Activated CD4-positive, alpha-beta T cell treated with anti-CD3 and anti-CD28 coated beads, Interleukin-2, amount 10 ng/mL, durations not matched to agents 24 days and 14 days (primary cell): ENCODE measurements at regions of chr3 and their contacts with region 1.

Region 1: DNA sequence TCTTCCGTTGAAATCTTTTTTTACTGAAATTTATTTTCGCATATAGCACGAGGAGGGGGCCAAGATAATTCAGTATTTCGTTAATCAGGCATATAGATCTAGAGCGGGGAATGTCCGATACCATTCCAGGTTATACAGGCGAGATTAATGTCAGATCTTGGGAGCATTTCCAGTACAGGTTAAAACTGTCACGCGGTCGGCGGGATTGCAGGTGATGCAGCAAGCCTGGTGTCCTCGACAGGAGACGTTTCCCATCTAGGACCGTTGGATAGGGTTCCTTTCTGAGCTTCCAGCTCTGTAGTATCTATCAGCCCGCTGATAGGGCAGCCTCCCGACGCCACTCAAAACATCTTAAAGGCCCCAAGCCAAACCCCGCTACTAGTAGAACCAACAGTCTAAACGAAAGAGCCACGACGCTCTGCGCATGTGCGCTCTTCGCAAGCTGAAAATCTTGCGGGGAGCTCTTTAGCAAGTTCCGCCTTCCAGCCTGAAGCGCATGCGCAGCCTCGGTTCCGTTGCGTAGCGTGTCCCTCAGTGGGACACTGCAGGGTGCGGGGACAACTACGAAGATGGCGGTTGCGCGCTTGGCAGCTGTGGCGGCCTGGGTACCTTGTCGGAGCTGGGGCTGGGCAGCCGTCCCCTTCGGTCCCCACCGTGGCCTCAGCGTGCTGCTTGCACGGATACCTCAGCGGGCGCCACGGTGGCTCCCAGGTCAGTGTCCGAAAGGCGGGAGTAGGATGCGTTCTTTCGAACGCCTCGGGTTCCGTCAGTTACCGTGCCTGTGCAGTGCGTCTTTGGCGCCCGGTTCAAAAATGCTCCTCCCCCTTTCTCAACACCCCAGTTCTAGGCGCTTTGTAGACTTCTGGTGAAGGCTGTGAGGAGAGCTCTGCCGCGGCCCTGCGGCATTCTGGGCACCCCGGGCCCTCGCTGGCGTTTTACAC is at the start of gene ABHD10:
- DNase-seq: peak; percentile 99
- H3K4me3 Mint-ChIP-seq: peak within 1 kb of the TSS; percentile 92
- H3K27ac Mint-ChIP-seq: peak within 1 kb of the TSS; percentile 93
- H3K4me1 Mint-ChIP-seq: peaks cover 36% of the 10 kb centered on the region
- H3K27me3 Mint-ChIP-seq: peaks cover 19% of the 10 kb centered on the region
- total RNA-seq, gene ABHD10: 39.5 TPM in 2 replicates

Region 2: DNA sequence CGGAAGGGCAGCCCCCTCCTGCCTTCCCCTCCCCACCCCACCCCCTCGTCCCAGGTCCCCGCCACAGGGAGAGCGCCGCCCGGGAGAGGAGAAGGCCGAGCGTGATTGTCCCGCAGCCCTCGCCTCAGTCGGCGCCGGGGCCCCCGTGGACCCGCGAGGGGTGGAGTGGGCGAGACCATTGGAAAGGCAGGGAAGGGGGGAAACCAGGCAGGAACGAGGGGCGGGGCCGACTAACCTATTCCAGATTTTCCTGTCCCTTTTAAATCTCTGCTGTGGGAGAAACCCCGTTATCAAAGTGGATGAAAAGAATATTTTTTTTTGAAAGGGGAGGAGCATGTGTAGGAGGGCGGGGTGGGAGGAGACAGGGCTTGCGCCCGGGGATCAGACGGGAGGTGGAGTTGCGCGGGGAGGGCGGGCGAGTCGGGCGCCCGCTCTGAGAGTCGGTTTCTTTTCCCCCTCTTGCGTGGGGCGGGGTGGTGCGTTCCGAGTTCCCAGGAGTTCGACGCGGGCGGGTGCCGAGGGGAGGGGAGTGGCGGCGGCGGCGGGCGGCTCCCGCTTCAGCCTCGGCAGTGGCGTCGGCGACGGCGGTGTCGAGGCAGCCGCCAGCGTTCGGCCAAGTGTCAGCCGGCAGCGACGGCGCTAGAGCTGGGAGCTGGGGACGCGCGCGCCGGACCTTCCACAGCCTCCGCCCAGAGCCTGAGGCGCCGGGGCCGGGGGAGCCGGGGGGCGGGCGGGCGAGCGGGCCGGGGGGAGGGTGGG is 907.3 kb before region 1 on chr3 and contains the start of gene NECTIN3:
- intact Hi-C with region 1: loop called (anchors 10 kb)
- DNase-seq: peak; percentile 94
- H3K4me3 Mint-ChIP-seq: peak within 1 kb of the TSS; percentile 94
- H3K27ac Mint-ChIP-seq: peak within 1 kb of the TSS; percentile 87
- H3K4me1 Mint-ChIP-seq: peaks cover 30% of the 10 kb centered on the region
- H3K27me3 Mint-ChIP-seq: peaks cover 55% of the 10 kb centered on the region
- total RNA-seq, gene NECTIN3: 3.0 and 4.4 TPM in 2 replicates

Region 3: DNA sequence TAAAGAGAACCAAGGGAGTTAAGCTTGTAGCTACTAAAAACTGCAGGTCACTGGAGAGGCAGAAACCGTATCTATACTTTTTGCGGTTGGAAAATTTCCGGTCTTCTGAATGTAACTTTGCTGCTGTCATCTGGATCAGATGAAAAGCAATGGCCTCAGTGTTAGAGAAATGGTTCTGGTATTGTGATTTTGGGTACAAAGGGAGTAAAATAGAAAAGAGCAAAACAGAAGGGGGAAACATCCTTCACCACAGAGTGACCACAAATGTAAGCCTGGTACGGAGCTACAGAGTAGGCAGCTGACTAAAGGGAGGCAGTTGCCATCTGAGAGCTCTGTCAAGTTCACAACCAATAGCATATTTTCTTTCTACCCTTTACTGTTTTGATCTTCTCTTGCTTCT is 431.1 kb before region 1 on chr3:
- intact Hi-C with region 1: loop called (anchors 5 kb)
- DNase-seq: peak; percentile 87
- H3K4me3 Mint-ChIP-seq: no peak overlapping the region
- H3K27ac Mint-ChIP-seq: no peak overlapping the region
- H3K4me1 Mint-ChIP-seq: peaks cover 46% of the 10 kb centered on the region
- H3K27me3 Mint-ChIP-seq: no peaks in the 10 kb centered on the region

Region 4: GRCh38 chr3:111989061-111989678 is 10.4 kb after region 1 on chr3:
- intact Hi-C with region 1: loop called (anchors 1 kb)
- DNase-seq: peak; percentile 68
- H3K4me3 Mint-ChIP-seq: no peak overlapping the region
- H3K27ac Mint-ChIP-seq: no peak overlapping the region
- H3K4me1 Mint-ChIP-seq: peaks cover 38% of the 10 kb centered on the region
- H3K27me3 Mint-ChIP-seq: no peaks in the 10 kb centered on the region

Region 5: DNA sequence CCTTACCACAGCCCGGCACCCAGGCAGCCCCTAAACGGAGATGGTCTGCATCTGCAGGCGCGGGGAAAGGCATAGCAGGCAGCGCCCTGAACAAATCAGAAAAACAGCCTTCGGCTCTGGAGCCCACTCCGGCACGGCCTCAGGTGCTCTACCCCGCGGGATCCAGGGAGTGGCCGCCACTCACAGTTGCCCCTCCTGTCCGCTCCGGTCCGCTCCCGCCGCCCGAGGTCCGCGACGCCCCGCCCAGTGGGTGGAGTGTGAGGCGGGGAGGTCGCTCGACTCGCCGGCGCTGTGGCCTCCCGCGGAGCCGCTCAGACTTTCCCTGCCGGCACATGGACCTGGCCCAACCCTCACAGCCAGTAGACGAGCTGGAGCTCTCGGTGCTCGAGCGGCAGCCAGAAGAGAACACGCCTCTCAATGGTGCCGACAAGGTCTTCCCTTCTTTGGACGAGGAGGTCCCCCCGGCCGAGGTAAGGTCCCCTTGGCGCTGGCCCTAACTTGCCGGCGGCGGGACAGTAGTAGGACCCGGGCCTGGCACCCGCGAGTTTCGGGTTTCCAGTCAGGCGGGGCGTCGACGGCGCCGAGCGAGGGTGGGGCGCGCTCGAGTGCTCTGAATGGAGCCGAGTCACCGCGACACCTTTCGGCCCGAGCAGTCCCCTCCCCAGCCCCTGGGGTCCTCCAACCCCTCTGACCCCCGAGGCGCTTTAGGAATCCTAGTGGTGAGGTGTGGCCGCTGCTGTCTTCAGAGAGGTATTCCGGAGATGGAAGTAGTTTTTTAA is 107.5 kb after region 1 on chr3 and contains the start of gene C3orf52:
- intact Hi-C with region 1: loop called (anchors 5 kb)
- DNase-seq: peak; percentile 94
- H3K4me3 Mint-ChIP-seq: peak within 1 kb of the TSS; percentile 93
- H3K27ac Mint-ChIP-seq: peak within 1 kb of the TSS; percentile 87
- H3K4me1 Mint-ChIP-seq: peaks cover 48% of the 10 kb centered on the region
- H3K27me3 Mint-ChIP-seq: no peaks in the 10 kb centered on the region
- total RNA-seq, gene C3orf52: 13.0 and 14.2 TPM in 2 replicates